Activated CD8-positive, alpha-beta T cell treated with anti-CD3 and anti-CD28 coated beads for 36 hours (primary cell): ENCODE measurements at regions of chr5 and their contacts with region 1.

Region 1: GRCh38 chr5:141878711-141879425 is 658 bp upstream of the PCDH1 start:
- DNase-seq: peak; percentile 94
- ATAC-seq: peak; percentile 82
- H3K4me3 Mint-ChIP-seq: peak overlapping the region; percentile 55
- H3K27ac Mint-ChIP-seq: no peak overlapping the region
- H3K4me1 Mint-ChIP-seq: peaks cover 17% of the 10 kb centered on the region
- H3K27me3 Mint-ChIP-seq: peaks cover 70% of the 10 kb centered on the region
- CTCF ChIP-seq: peak; percentile 98

Region 2: GRCh38 chr5:141529002-141529401 is 349.9 kb before region 1 on chr5:
- CTCF ChIA-PET with region 1: no interaction called
- POLR2A ChIA-PET with region 1: no interaction called
- intact Hi-C with region 1: no loop called
- DNase-seq: no peak
- ATAC-seq: no peak
- H3K4me3 Mint-ChIP-seq: no peak overlapping the region
- H3K27ac Mint-ChIP-seq: no peak overlapping the region
- H3K4me1 Mint-ChIP-seq: peaks cover 17% of the 10 kb centered on the region
- H3K27me3 Mint-ChIP-seq: no peaks in the 10 kb centered on the region
- CTCF ChIP-seq: no peak

Region 3: DNA sequence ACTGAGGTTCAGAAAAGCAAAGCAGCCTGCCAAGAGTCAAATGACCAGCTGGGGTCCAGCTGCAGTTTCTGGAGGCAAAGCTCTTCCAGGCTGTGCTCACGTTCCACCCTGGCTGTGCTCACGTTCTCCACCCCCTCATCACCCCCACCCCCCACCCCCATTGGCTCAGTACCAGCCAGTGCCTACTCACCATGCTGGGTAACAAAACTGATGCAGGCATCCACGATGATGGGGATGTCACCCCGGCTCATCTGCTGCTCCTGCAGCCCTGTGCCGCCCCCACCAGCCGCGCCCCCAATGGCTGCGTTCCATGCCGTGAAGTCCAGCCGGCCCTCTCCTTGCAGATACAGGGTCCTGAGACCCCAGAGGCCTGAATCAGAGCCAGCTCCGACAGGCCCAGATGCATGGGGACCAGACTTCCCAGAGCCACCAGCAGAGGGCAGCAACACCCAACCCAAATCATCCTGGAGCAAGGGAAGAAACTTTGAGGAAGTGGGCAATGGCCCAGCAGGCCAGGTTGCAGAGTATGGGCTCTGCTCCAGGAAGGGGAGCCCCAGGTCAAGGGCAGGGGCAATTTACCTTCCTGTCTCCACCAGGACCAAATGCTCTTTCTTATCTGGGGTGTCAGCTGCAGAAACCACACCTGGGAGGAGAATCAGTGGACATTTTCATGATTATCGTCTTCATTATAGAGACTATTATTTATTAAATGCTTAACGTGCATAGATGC is 214.0 kb before region 1 on chr5:
- CTCF ChIA-PET with region 1: interaction called, 22 read pairs
- POLR2A ChIA-PET with region 1: interaction called, 4 read pairs
- intact Hi-C with region 1: no loop called
- DNase-seq: peak; percentile 85
- ATAC-seq: peak; percentile 95
- H3K4me3 Mint-ChIP-seq: no peak overlapping the region
- H3K27ac Mint-ChIP-seq: no peak overlapping the region
- H3K4me1 Mint-ChIP-seq: peaks cover 3% of the 10 kb centered on the region
- H3K27me3 Mint-ChIP-seq: no peaks in the 10 kb centered on the region
- CTCF ChIP-seq: peak; percentile 89

Region 4: DNA sequence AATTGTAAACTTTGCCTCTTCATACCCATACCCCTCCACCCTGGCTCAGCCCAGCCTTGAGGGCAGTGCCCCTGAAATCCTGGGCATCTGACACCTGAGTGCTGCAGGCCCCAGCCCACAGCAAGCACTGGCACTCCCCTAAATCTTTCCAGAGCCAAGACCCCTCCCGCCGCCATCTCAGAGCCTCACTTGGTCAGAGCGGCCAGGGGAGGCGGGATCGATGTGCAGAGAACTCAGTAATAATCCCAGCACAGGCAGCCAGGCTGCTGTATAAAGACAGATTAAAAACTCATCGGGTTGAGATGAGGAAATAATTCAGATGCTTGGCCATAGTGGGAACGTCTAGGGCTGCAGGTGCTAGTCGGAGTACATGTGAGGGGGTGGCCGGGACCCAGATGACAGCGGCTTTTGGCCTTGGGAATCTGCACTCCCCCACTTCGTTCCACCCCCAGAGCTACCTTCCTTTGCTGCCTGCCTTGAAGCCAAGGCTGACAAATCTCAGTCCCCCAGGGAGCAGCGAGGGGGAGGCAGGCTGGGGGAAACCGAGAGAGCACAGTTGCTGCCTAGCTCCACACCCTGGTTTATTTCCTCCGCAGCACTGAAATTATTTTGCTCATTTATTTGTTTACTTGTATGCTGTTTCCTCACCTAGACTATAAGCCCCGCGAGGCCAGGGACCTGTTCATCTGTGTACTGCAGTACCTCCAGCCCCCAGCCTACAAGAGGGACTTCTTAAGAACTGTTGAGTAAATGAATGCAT is 177.3 kb before region 1 on chr5:
- CTCF ChIA-PET with region 1: interaction called, 205 read pairs
- POLR2A ChIA-PET with region 1: interaction called, 3 read pairs
- intact Hi-C with region 1: loop called (anchors 2 kb)
- DNase-seq: peak; percentile 47
- ATAC-seq: peak; percentile 46
- H3K4me3 Mint-ChIP-seq: peak overlapping the region; percentile 56
- H3K27ac Mint-ChIP-seq: no peak overlapping the region
- H3K4me1 Mint-ChIP-seq: peaks cover 11% of the 10 kb centered on the region
- H3K27me3 Mint-ChIP-seq: peaks cover 32% of the 10 kb centered on the region
- CTCF ChIP-seq: no peak

Region 5: DNA sequence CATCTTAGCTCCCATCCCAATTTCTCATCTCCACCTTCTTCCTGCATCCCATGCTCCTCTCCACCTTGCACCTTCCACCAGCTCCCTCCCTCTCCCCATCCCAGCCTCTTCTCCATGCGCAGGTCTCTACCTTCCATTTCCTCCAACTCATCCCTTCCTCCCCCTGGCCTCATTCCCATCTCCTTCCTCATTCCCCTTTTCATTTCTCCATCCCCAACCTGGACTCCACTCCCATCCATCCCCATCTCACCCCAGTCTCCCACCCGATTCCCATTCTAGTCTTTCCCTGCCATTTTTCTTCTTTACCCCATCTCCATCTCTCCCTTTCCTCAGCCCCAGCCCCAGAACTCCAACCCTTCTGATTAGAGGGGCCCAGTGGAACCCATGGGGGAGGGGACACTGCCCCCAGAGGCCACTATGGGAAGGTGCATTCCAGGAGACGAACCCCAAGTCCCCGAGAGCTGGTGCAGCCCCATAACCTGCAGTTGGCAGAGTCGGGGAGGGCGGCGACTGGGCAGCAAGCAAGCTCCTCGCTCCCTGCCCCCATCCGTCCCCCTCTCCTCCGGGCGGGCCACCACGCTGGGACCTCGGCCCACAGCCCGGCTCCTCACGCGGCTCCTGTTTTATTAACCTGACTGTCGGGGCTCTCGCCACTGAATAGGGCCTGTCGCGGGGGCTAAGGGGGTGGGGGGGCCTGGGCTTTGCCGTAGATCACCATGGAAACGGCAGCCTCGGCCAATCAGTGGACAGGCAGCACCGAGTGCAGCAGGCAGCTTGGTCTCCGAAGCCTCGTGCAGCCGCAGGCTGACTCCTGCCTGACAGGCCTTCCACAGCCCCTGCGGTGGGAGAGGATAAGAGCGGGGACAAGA is 67.3 kb before region 1 on chr5:
- CTCF ChIA-PET with region 1: interaction called, 46 read pairs
- POLR2A ChIA-PET with region 1: interaction called, 3 read pairs
- intact Hi-C with region 1: no loop called
- DNase-seq: peak; percentile 49
- ATAC-seq: peak; percentile 88
- H3K4me3 Mint-ChIP-seq: no peak overlapping the region
- H3K27ac Mint-ChIP-seq: no peak overlapping the region
- H3K4me1 Mint-ChIP-seq: no peaks in the 10 kb centered on the region
- H3K27me3 Mint-ChIP-seq: peaks cover 38% of the 10 kb centered on the region
- CTCF ChIP-seq: peak; percentile 77

Region 6: GRCh38 chr5:141846031-141846430 is 32.8 kb before region 1 on chr5:
- CTCF ChIA-PET with region 1: interaction called, 32 read pairs
- POLR2A ChIA-PET with region 1: interaction called, 3 read pairs
- intact Hi-C with region 1: no loop called
- DNase-seq: peak; percentile 53
- ATAC-seq: no peak
- H3K4me3 Mint-ChIP-seq: no peak overlapping the region
- H3K27ac Mint-ChIP-seq: no peak overlapping the region
- H3K4me1 Mint-ChIP-seq: peaks cover 32% of the 10 kb centered on the region
- H3K27me3 Mint-ChIP-seq: peaks cover 1% of the 10 kb centered on the region
- CTCF ChIP-seq: no peak

Region 7: DNA sequence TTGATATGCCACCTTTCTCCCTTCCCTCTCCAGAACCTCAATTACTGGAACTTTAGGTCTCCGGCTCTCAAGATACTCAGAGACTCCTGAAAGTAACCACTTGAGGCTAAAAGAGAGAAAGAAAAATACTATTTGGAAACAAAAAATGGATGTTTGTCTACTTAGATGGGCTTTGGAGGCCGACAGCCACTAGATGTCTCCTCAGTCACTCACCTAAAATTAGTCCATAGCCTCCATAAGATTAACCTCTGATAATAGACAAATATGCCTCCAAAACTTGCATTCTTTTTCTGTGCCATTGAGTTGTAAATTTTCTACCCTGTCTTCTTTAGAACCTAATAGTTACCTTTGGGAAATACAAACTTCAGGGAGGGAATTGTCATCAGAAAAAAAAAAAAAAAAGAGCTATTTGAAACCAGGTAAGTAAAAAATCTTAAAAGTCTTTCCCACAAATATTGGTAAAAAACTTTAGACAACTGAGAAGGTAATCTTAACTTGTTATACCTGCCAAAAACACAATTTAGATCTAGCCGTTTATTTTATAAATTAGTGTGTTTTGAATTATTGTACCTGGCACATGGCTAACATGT is 10.5 kb after region 1 on chr5:
- CTCF ChIA-PET with region 1: interaction called, 35 read pairs
- POLR2A ChIA-PET with region 1: no interaction called
- intact Hi-C with region 1: no loop called
- DNase-seq: peak; percentile 16
- ATAC-seq: no peak
- H3K4me3 Mint-ChIP-seq: no peak overlapping the region
- H3K27ac Mint-ChIP-seq: no peak overlapping the region
- H3K4me1 Mint-ChIP-seq: no peaks in the 10 kb centered on the region
- H3K27me3 Mint-ChIP-seq: peaks cover 29% of the 10 kb centered on the region
- CTCF ChIP-seq: peak; percentile 32

Region 8: GRCh38 chr5:141923448-141924352 is 44.8 kb after region 1 on chr5 and contains the start of gene DELE1:
- CTCF ChIA-PET with region 1: interaction called, 12 read pairs
- POLR2A ChIA-PET with region 1: no interaction called
- intact Hi-C with region 1: no loop called
- DNase-seq: peak; percentile 96
- ATAC-seq: peak; percentile 93
- H3K4me3 Mint-ChIP-seq: peak within 1 kb of the TSS; percentile 82
- H3K27ac Mint-ChIP-seq: peak within 1 kb of the TSS; percentile 91
- H3K4me1 Mint-ChIP-seq: peaks cover 24% of the 10 kb centered on the region
- H3K27me3 Mint-ChIP-seq: no peaks in the 10 kb centered on the region
- CTCF ChIP-seq: no peak
- total RNA-seq, gene DELE1: 50.1 to 57.4 TPM